CD4-positive, alpha-beta memory T cell (primary cell): ENCODE measurements at regions of chr11 and their contacts with region 1.

Region 1: GRCh38 chr11:107276077-107276476 is 181.5 kb downstream of the CWF19L2 start:
- DNase-seq: no peak
- H3K4me3 ChIP-seq: no peak overlapping the region
- H3K4me3 Mint-ChIP-seq: no peak overlapping the region
- H3K27ac ChIP-seq: no peak overlapping the region
- H3K27ac Mint-ChIP-seq: no peak overlapping the region
- H3K4me1 ChIP-seq: no peaks in the 10 kb centered on the region
- H3K4me1 Mint-ChIP-seq: no peaks in the 10 kb centered on the region
- H3K27me3 ChIP-seq: no peaks in the 10 kb centered on the region
- H3K27me3 Mint-ChIP-seq: no peaks in the 10 kb centered on the region

Region 2: DNA sequence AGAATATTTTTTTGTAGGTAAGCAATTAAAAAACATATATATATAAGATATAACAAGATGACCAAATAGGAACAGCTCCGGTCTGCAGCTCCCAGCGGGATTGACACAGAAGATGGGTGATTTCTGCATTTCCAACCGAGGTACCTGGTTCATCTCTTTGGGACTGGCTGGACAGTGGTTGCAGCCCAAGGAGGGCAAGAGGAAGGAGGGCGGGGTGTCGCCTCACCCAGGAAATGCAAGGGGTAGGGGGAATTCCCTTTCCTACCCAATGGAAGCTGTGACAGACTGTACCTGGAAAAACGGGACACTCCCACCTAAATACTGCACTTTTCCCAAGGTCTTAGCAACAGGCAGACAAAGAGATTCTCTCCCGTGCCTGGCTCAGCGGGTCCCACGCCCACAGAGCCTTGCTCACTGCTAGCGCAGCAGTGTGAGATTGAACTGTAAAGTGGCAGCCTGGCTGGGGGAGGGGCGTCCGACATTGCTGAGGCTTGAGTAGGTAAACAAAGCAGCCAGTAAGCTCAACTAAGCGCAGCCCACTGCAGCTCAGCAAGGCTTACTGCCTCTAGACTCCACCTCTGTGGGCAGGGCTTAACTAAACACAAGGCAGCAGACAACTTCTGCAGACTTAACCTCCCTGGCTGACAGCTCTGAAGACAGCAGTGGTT is 17.7 kb after region 1 on chr11:
- CTCF ChIA-PET with region 1: no interaction called
- POLR2A ChIA-PET with region 1: no interaction called
- intact Hi-C with region 1: loop called (anchors 2 kb)
- DNase-seq: no peak
- H3K4me3 ChIP-seq: no peak overlapping the region
- H3K4me3 Mint-ChIP-seq: peak overlapping the region in 1 of 8 donors; percentile 25
- H3K27ac ChIP-seq: no peak overlapping the region
- H3K27ac Mint-ChIP-seq: no peak overlapping the region
- H3K4me1 ChIP-seq: no peaks in the 10 kb centered on the region
- H3K4me1 Mint-ChIP-seq: no peaks in the 10 kb centered on the region
- H3K27me3 ChIP-seq: no peaks in the 10 kb centered on the region
- H3K27me3 Mint-ChIP-seq: no peaks in the 10 kb centered on the region

Region 3: GRCh38 chr11:107316426-107316825 is 40.3 kb after region 1 on chr11:
- CTCF ChIA-PET with region 1: no interaction called
- POLR2A ChIA-PET with region 1: no interaction called
- intact Hi-C with region 1: no loop called
- DNase-seq: no peak
- H3K4me3 ChIP-seq: no peak overlapping the region
- H3K4me3 Mint-ChIP-seq: no peak overlapping the region
- H3K27ac ChIP-seq: no peak overlapping the region
- H3K27ac Mint-ChIP-seq: no peak overlapping the region
- H3K4me1 ChIP-seq: no peaks in the 10 kb centered on the region
- H3K4me1 Mint-ChIP-seq: no peaks in the 10 kb centered on the region
- H3K27me3 ChIP-seq: no peaks in the 10 kb centered on the region
- H3K27me3 Mint-ChIP-seq: no peaks in the 10 kb centered on the region